Aorta (tissue), 5 donors: ENCODE measurements at regions of chr2 and their contacts with region 1.

Region 1: GRCh38 chr2:165293440-165294353 is 54.5 kb downstream of the SCN2A start:
- DNase-seq: no peak
- ATAC-seq: peak; percentile 92
- H3K4me3 ChIP-seq: no peak overlapping the region
- H3K27ac ChIP-seq: no peak overlapping the region
- H3K4me1 ChIP-seq: no peaks in the 10 kb centered on the region
- H3K27me3 ChIP-seq: no peaks in the 10 kb centered on the region

Region 2: DNA sequence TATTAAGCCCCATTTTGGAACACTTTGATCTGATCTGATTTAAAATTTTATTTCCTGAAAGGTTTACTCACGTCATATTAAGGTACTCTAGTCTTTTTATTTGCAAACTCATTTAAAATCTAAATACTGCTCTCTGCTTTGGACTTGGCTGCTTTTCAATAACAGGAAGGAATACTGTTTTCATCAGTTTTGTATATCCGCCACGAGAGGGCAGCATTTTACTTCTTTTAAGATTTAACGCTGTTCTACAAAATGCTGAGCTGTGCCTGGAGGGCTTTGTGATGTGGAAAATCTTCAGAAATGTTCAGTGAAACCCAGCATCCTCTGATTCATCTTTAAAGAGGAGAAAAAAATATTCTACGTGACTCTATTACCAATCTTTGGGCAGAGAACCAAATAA is 300.9 kb before region 1 on chr2:
- intact Hi-C with region 1: loop called in 1 of 2 experiments (anchors 5 kb)
- DNase-seq: peak in 1 of 2 donors; percentile 45
- ATAC-seq: peak; percentile 75
- H3K4me3 ChIP-seq: no peak overlapping the region
- H3K27ac ChIP-seq: no peak overlapping the region
- H3K4me1 ChIP-seq: peaks cover 0 to 3% of the 10 kb centered on the region in 2 donors
- H3K27me3 ChIP-seq: no peaks in the 10 kb centered on the region

Region 3: DNA sequence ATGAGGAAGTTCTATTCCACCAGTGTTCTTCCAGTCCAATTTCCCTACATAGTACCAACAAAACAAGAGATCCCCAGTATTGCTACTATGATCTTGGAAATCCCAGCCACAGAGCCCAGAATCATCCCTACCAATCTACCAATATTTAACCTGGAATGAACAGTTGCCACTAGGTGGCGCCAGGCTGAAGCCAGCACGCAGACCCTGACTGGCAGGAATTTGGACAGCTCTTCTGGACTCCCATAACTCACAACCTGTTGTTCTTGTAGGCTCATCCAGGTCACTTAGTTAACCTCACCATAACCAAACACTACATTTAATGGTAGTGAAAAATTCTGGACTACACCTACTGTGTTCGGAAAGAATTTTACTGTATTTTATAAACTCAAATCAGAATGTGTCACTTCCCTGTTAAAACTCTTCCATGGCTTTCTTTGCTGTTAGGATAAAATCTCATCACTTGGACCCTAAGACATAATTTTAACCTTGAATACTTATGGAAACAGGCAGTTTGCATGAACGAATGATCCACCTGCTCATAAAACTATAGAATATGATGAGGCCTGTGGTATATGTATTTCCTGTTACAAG is 278.6 kb before region 1 on chr2:
- intact Hi-C with region 1: loop called in 1 of 2 experiments (anchors 5 kb)
- DNase-seq: peak; percentile 59 to 85
- ATAC-seq: peak; percentile 61
- H3K4me3 ChIP-seq: no peak overlapping the region
- H3K27ac ChIP-seq: no peak overlapping the region
- H3K4me1 ChIP-seq: no peaks in the 10 kb centered on the region
- H3K27me3 ChIP-seq: no peaks in the 10 kb centered on the region

Region 4: GRCh38 chr2:165239856-165240515 is 53.7 kb before region 1 on chr2:
- intact Hi-C with region 1: loop called in 1 of 2 experiments (anchors 5 kb)
- DNase-seq: no peak
- ATAC-seq: no peak
- H3K4me3 ChIP-seq: no peak overlapping the region
- H3K27ac ChIP-seq: no peak overlapping the region
- H3K4me1 ChIP-seq: no peaks in the 10 kb centered on the region
- H3K27me3 ChIP-seq: no peaks in the 10 kb centered on the region

Region 5: GRCh38 chr2:165428926-165429325 is 135.2 kb after region 1 on chr2:
- intact Hi-C with region 1: no loop called
- DNase-seq: no peak
- ATAC-seq: no peak
- H3K4me3 ChIP-seq: no peak overlapping the region
- H3K27ac ChIP-seq: no peak overlapping the region
- H3K4me1 ChIP-seq: no peaks in the 10 kb centered on the region
- H3K27me3 ChIP-seq: no peaks in the 10 kb centered on the region